Common myeloid progenitor, CD34-positive (primary cell): ENCODE measurements at regions of chr5 and their contacts with region 1.

Region 1: DNA sequence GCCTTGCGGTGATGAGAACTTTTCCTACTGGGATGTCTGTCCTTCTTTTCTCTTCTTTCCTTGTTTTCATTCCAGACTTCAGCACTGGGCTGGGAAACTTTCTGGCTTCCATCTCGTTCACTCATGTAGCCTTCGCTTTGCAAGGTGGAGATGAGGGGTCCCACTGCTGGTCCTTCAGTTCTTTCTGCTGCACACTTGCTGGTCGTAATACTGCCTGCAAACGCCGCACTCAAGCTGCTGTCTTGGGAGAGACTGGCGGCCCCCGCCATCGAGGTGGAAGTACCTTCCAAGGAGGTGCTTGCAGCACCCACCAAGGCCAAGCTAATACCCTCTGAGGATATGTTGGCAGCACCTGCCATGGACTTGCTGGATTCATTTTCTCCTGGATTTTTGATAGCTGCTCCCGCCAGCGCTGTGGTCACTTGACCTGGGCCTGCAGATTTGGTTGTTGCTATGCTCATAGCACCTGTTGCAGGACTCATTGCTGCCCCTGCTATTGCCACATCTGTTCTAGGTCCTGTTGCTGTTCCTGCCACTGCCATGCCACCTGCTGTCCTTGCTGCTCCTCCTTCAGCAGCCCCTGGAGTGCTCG is 3.0 kb downstream of the GARIN3 start:
- DNase-seq: no peak
- H3K4me3 ChIP-seq: no peak overlapping the region
- H3K27ac ChIP-seq: no peak overlapping the region
- H3K4me1 ChIP-seq: no peaks in the 10 kb centered on the region
- H3K27me3 ChIP-seq: no peaks in the 10 kb centered on the region

Region 2: DNA sequence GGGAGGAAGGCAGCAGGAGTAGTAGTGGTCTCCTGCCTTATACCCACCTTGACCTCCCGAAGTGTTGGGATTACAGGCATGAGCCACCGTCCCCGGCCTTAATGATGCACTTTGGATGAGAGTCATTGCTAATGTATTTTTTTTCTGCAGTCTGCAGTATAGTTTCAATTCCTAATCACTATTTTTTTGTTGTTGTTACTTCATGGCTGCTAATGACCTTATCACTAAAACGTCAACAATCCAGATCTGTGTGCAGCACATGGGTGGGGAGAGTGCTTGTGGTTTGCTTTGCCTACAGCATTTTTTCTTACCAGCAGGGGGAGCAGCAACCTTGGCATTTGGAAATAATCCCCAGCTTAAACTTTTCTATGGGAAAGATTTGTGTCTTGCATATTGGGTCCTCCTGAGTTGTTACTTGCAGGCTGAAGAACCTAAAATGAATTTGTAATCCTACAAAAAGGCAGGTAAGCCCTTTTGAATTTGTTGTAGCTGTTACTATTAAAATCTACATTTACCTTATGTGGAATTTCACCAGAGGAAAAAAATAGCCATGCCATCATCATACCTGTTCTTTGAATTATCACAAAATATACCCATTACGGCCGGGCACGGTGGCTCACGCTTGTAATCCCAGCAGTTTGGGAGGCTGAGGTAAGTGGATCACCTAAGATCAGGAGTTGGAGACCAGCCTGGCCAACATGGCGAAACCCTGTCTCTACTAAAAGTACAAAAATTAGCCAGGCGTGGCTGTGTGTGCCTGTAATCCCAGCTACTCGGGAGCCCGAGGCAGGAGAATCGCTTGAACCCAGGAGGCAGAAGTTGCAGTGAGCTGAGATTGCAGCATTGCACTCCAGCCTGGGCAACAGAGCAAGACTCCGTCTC is 14.0 kb before region 1 on chr5:
- CTCF ChIA-PET with region 1: interaction called, 13 read pairs
- POLR2A ChIA-PET with region 1: no interaction called
- DNase-seq: peak; percentile 78 to 89 (median 84)
- H3K4me3 ChIP-seq: no peak overlapping the region
- H3K27ac ChIP-seq: no peak overlapping the region
- H3K4me1 ChIP-seq: peaks cover 0 to 3% (median under 1%) of the 10 kb centered on the region in 4 experiments
- H3K27me3 ChIP-seq: no peaks in the 10 kb centered on the region